Endothelial cell of umbilical vein (primary cell): ENCODE measurements at regions of chr9 and their contacts with region 1.

Region 1: DNA sequence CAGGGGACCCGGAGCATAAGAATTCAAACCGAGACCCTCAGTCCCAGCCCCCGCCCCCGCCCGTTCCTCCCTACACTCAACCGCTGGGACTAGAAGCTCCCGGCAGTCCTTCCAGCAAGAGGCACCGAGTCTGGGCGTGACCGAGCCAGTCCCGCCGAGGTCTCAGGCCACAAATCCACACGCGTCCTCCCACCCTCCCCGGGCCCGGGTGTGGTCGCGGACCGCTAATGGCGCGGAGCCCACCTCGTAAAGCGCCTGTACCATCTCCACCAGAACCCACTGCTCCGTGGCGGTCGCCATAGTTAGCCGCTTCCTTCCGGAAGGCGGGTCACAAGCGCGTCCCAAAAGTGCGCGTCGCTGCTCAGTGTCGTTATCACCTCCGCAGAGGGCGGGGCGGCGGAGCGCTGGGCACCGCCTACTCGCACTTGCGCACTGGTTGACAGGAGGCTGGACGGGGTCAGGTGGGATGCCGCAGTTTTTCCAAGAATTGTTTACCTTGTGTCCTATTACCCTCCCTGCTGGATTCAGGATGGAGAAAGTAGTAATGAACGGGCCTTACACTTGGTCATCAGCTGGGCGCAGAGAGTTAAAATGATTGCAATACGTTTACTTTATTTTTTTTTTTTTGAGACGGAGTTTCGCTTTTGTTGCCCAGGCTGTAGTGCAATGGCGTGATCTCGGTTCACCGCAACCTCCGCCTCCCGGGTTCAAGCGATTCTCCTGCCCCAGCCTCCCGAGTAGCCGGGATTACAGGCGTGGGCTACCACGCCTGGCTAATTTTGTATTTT is at the start of gene SPTLC1:
- DNase-seq: peak; percentile 98
- H3K4me3 ChIP-seq: peak within 1 kb of the TSS; percentile 88 to 99 (median 89)
- H3K27ac ChIP-seq: peak within 1 kb of the TSS; percentile 74
- H3K4me1 ChIP-seq: peaks cover 14% of the 10 kb centered on the region
- H3K27me3 ChIP-seq: peaks cover 2 to 6% of the 10 kb centered on the region in 2 experiments
- CTCF ChIP-seq: no peak
- POLR2A ChIP-seq: peak; percentile 84
- total RNA-seq, gene SPTLC1: 64.6 and 68.5 TPM in 2 replicates

Region 2: GRCh38 chr9:92097997-92098482 is 17.2 kb before region 1 on chr9:
- CTCF ChIA-PET with region 1: no interaction called
- POLR2A ChIA-PET with region 1: interaction called, 5 read pairs
- dilution Hi-C with region 1: no loop called
- intact Hi-C with region 1: loop called (anchors 1 kb)
- DNase-seq: peak; percentile 91
- H3K4me3 ChIP-seq: peak overlapping the region in 2 of 3 experiments; percentile 3 to 30
- H3K27ac ChIP-seq: peak overlapping the region; percentile 23
- H3K4me1 ChIP-seq: peaks cover 24% of the 10 kb centered on the region
- H3K27me3 ChIP-seq: no peaks in the 10 kb centered on the region
- CTCF ChIP-seq: no peak
- POLR2A ChIP-seq: peak; percentile 24

Region 3: GRCh38 chr9:92224177-92224576 is 108.9 kb after region 1 on chr9:
- CTCF ChIA-PET with region 1: no interaction called
- POLR2A ChIA-PET with region 1: no interaction called
- dilution Hi-C with region 1: no loop called
- intact Hi-C with region 1: no loop called
- DNase-seq: no peak
- H3K4me3 ChIP-seq: no peak overlapping the region
- H3K27ac ChIP-seq: no peak overlapping the region
- H3K4me1 ChIP-seq: no peaks in the 10 kb centered on the region
- H3K27me3 ChIP-seq: no peaks in the 10 kb centered on the region
- CTCF ChIP-seq: no peak
- POLR2A ChIP-seq: no peak